AG04450 (cell line): ENCODE measurements at regions of chr1 and their contacts with region 1.

Region 1: GRCh38 chr1:240189386-240189989 is 97.8 kb downstream of the FMN2 start:
- DNase-seq: no peak
- H3K4me3 ChIP-seq: no peak overlapping the region
- H3K27ac ChIP-seq: no peak overlapping the region
- H3K27me3 ChIP-seq: no peaks in the 10 kb centered on the region
- CTCF ChIP-seq: peak; percentile 90

Region 2: DNA sequence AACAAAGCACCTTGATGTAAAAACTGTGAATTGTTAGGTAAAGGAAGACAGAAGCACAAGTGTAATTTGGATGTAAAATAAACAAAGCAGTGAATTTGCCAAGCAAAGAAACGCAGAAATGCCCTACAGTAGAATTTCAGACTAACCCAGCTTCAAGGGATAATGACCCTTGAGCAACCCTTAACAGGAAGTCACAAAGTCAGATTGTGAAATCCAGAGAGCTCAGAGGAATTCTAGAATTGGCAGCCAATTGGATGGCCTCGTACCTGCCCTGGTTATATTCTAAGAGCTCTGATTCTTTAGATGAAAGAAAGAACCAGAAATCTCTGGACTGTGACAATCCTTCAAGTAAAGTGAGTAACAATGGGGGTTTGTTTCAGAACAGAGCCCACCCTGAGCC is 955.9 kb before region 1 on chr1:
- CTCF ChIA-PET with region 1: no interaction called
- POLR2A ChIA-PET with region 1: no interaction called
- DNase-seq: no peak
- H3K4me3 ChIP-seq: no peak overlapping the region
- H3K27ac ChIP-seq: no peak overlapping the region
- H3K27me3 ChIP-seq: no peaks in the 10 kb centered on the region
- CTCF ChIP-seq: no peak

Region 3: DNA sequence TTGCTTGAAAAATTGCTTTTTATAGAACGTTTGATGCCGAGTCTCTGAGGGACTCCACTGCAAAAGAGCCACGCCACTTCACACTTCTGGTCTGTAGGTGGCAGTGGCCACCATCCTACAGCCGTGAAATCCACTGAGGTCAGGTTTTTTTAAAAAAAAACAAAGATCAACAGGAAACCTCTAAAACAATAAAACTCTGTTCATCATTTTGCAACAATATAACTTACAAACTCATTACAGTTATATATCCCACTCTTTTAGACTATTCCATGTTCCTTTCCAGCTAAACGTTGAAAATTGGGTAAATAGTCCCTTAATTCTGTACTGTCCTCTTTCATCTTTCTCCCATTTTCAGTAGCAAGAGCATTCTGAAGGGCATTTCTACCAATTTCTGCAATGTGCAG is 162.4 kb before region 1 on chr1:
- CTCF ChIA-PET with region 1: interaction called, 152 read pairs
- POLR2A ChIA-PET with region 1: no interaction called
- DNase-seq: no peak
- H3K4me3 ChIP-seq: no peak overlapping the region
- H3K27ac ChIP-seq: no peak overlapping the region
- H3K27me3 ChIP-seq: no peaks in the 10 kb centered on the region
- CTCF ChIP-seq: peak; percentile 99

Region 4: DNA sequence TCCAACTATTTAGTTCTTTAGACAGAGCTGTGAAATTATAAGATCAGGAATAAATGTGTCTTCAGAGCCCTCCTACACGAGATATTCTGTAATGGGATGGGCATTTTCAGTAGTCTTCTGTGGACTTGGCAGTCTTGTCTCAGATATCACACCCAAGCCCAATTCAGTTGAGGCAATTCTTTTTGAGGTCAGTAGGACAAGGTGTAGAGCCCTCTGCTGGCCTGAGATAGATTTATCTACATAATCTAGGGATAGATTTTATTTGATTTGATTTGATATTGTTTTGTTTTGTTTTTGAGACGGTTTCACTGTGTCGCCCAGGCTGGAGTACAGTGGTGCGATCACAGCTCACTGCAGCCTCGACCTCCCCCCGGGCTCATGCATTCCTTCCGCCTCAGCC is 20.3 kb before region 1 on chr1:
- CTCF ChIA-PET with region 1: interaction called, 17 read pairs
- POLR2A ChIA-PET with region 1: no interaction called
- DNase-seq: no peak
- H3K4me3 ChIP-seq: no peak overlapping the region
- H3K27ac ChIP-seq: no peak overlapping the region
- H3K27me3 ChIP-seq: no peaks in the 10 kb centered on the region
- CTCF ChIP-seq: peak; percentile 40

Region 5: DNA sequence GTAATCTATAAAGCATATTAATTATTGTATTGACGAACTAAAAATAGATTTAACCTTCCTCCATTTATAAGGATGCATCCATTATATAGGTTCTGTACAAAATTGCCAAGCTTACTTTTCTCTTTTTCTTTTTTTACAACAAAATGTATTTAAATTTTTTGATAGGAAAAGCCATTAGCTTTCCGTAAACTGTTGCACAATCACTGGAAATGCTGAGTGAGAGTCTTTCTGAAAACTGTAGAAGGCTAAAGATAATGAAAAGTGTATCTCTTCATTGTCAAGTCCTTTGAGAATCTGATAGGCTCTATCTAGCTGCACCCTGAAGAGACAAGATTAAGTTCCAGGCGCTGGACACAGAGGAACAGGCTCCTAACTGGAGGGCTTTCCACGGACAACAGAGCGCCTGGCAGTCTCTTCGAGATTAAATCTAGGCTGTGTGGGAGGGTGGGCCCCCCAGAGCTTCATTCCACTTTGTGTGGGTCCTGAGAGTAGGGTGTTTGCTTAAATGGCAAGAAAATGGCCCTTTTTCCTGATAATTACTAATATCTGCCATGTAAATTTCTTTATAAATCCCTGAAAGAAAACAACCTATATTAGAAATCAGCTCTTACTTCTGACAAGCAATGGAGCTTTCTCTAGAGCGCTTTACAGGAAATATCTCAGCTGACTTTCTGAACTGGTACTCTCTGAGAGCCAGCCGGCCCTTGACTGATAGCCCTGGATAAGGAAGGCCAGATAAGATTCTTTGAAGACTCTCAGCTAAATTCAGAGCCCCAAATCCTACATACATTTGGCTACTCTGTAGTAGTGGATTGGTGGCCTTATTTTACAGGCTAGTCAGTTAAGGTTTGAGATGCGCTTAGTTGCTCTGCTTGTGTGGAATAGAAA is 10.5 kb after region 1 on chr1:
- CTCF ChIA-PET with region 1: interaction called, 23 read pairs
- POLR2A ChIA-PET with region 1: no interaction called
- DNase-seq: no peak
- H3K4me3 ChIP-seq: no peak overlapping the region
- H3K27ac ChIP-seq: no peak overlapping the region
- H3K27me3 ChIP-seq: no peaks in the 10 kb centered on the region
- CTCF ChIP-seq: no peak

Region 6: DNA sequence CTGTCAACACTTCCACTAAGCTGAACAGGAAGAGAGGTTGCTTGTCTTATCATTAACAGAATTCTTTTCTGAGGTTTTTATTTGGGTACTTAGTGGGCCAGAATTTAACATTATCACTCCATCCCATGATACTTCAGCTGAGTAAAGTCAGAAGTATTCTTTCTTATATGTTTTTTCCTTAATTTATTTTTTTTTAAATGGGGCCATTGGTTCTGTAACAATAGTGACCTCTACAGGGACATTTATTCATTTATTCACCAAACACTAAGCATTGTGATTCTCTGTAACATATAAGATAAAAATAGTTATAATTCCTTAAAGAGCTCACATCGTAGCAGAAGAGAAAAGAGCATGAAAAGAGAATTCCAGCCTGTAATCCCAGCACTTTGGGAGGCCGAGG is 412.7 kb after region 1 on chr1:
- CTCF ChIA-PET with region 1: interaction called, 17 read pairs
- POLR2A ChIA-PET with region 1: no interaction called
- DNase-seq: no peak
- H3K4me3 ChIP-seq: no peak overlapping the region
- H3K27ac ChIP-seq: no peak overlapping the region
- H3K27me3 ChIP-seq: no peaks in the 10 kb centered on the region
- CTCF ChIP-seq: peak; percentile 28

Region 7: GRCh38 chr1:240691521-240692338 is 502.2 kb after region 1 on chr1:
- CTCF ChIA-PET with region 1: interaction called, 29 read pairs
- POLR2A ChIA-PET with region 1: interaction called, 9 read pairs
- DNase-seq: no peak
- H3K4me3 ChIP-seq: no peak overlapping the region
- H3K27ac ChIP-seq: no peak overlapping the region
- H3K27me3 ChIP-seq: no peaks in the 10 kb centered on the region
- CTCF ChIP-seq: peak; percentile 98